Activated B cell treated with CpG ODN at 0.5 μM for 24 hours (primary cell): ENCODE measurements at regions of chr5 and their contacts with region 1.

Region 1: DNA sequence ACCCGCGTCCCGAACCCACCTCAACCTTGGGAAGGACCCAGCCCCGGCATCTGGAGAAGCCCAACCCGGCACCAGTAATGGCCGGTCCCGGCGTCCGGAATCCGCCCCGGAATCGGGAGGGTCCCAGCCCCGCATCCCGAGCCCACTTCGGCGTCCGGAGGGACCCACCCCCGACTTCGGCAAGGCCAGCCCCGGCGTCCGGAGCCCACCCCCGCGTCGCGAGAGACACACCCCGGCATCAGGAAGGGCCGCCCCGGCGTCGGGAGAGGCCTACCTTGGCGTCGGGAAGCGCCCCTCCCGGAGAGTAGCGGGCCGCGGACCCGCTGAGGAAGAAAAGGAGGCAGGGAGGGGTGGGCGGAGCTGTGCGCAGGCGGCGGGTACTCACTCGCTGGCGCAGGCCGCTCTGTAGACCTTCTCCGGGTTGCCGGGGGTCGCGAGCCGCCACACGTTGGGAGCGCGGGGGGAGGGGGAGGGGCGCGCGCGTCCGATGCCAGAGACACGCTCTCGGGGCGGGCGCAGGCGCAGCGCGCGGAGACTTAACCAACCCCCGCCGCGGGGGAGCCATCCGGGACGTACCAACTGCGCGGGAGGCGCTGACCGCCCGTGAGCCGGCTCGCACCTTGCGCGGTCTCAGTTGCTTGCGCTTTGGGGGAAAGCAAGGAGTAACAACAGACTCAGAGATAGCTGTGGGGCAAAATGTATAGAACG is at the start of gene UIMC1:
- DNase-seq: peak; percentile 93
- ATAC-seq: peak; percentile 89
- H3K4me3 Mint-ChIP-seq: peak within 1 kb of the TSS; percentile 93
- H3K27ac Mint-ChIP-seq: peak within 1 kb of the TSS; percentile 95
- H3K4me1 Mint-ChIP-seq: peaks cover 32% of the 10 kb centered on the region
- H3K27me3 Mint-ChIP-seq: no peaks in the 10 kb centered on the region
- CTCF ChIP-seq: no peak
- total RNA-seq, gene UIMC1: 72.5 and 75.8 TPM in 2 replicates

Region 2: GRCh38 chr5:176994460-176995121 is 11.8 kb before region 1 on chr5:
- CTCF ChIA-PET with region 1: interaction called, 6 read pairs
- POLR2A ChIA-PET with region 1: interaction called, 30 read pairs
- intact Hi-C with region 1: loop called (anchors 1 kb)
- DNase-seq: peak; percentile 32
- ATAC-seq: peak; percentile 89
- H3K4me3 Mint-ChIP-seq: peak overlapping the region; percentile 52
- H3K27ac Mint-ChIP-seq: peak overlapping the region; percentile 73
- H3K4me1 Mint-ChIP-seq: peaks cover 74% of the 10 kb centered on the region
- H3K27me3 Mint-ChIP-seq: no peaks in the 10 kb centered on the region
- CTCF ChIP-seq: no peak

Region 3: DNA sequence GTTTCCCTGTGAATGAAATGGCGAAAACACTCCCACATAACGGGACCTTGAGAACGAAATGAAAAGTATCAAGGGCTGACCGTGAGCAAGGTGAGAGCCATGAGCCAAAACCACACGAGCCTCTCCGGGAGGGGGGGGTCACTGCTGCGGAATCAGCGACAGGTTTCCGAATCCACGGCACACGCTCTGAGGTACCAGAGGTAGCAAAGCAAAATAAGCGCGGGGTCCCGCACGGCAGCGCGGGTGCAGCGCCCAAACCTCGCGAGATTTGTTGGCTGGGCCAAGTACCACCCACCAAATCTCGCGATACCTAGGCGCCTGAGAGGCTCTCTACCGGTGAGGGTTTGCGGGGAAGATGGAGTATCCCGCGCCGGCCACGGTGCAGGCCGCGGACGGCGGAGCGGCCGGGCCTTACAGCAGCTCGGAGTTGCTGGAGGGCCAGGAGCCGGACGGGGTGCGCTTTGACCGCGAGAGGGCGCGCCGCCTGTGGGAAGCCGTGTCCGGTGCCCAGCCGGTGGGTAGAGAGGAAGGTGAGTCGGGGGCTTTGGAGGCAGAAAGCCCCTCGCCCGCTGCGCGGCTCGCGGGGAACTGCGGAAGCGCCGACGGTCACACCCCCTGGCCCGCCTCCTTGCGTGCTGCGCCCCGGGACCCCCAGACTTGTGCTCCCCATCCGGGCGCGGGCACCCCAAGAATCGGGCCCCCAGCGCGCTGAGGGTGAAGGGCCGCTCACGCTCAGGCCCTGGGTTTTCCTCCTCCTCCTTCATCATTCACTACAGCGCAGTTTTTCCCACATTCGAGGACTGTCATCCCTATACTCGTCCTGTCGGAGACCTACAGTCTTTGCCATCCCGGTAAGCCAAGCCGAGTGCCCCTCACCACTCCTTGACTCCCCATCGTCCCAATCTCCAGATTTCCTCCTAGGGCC is 16.2 kb after region 1 on chr5 and contains the start of gene ZNF346:
- CTCF ChIA-PET with region 1: interaction called, 5 read pairs
- POLR2A ChIA-PET with region 1: interaction called, 17 read pairs
- intact Hi-C with region 1: loop called (anchors 1 kb)
- DNase-seq: peak; percentile 80
- ATAC-seq: peak; percentile 99
- H3K4me3 Mint-ChIP-seq: peak within 1 kb of the TSS; percentile 95
- H3K27ac Mint-ChIP-seq: peak within 1 kb of the TSS; percentile 89
- H3K4me1 Mint-ChIP-seq: peaks cover 36% of the 10 kb centered on the region
- H3K27me3 Mint-ChIP-seq: no peaks in the 10 kb centered on the region
- CTCF ChIP-seq: no peak
- total RNA-seq, gene ZNF346: 28.0 and 31.4 TPM in 2 replicates

Region 4: GRCh38 chr5:177036921-177037320 is 30.5 kb after region 1 on chr5:
- CTCF ChIA-PET with region 1: no interaction called
- POLR2A ChIA-PET with region 1: no interaction called
- intact Hi-C with region 1: no loop called
- DNase-seq: no peak
- ATAC-seq: no peak
- H3K4me3 Mint-ChIP-seq: no peak overlapping the region
- H3K27ac Mint-ChIP-seq: no peak overlapping the region
- H3K4me1 Mint-ChIP-seq: peaks cover 9% of the 10 kb centered on the region
- H3K27me3 Mint-ChIP-seq: no peaks in the 10 kb centered on the region
- CTCF ChIP-seq: no peak

Region 5: DNA sequence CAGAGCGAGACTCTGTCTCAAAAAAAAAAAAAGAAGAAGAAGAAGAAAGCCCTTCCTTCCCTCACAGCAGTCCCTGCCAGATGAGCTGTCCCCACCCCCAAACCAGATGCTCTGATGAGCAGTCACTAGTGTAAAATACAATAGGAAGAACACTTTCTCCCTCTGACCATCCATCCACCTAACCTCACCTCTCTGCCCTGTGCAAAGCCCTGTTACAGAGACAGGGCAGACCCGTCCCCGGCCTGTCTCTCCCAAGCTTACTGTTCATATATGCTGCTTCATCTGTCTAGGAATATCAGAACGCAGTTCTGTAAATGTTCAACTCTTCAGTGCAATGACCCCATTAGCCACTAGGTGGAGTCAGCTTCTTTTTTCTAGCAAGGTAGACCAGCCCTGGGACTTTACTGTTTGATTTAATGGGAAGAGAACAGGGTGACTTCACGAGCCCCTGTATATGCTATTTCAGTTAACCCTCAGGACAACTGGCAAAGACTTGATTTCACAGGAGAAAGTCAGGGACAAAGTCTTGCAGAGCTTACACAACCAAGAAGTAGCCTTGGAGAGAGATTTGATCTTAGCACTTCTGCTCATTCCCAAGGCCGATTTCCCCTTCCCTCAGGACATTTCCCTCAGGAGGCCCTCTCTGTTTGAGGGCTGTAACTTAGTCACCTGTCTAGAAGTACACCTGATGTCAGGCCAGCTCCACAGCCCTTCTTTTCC is 65.4 kb after region 1 on chr5:
- CTCF ChIA-PET with region 1: no interaction called
- POLR2A ChIA-PET with region 1: no interaction called
- intact Hi-C with region 1: loop called (anchors 5 kb)
- DNase-seq: peak; percentile 55
- ATAC-seq: peak; percentile 89
- H3K4me3 Mint-ChIP-seq: peak overlapping the region; percentile 61
- H3K27ac Mint-ChIP-seq: peak overlapping the region; percentile 82
- H3K4me1 Mint-ChIP-seq: peaks cover 35% of the 10 kb centered on the region
- H3K27me3 Mint-ChIP-seq: no peaks in the 10 kb centered on the region
- CTCF ChIP-seq: peak; percentile 85

Region 6: GRCh38 chr5:177086924-177087706 is 80.7 kb after region 1 on chr5:
- CTCF ChIA-PET with region 1: no interaction called
- POLR2A ChIA-PET with region 1: no interaction called
- intact Hi-C with region 1: loop called (anchors 5 kb)
- DNase-seq: peak; percentile 71
- ATAC-seq: peak; percentile 82
- H3K4me3 Mint-ChIP-seq: peak overlapping the region; percentile 50
- H3K27ac Mint-ChIP-seq: no peak overlapping the region
- H3K4me1 Mint-ChIP-seq: peaks cover 19% of the 10 kb centered on the region
- H3K27me3 Mint-ChIP-seq: peaks cover 6% of the 10 kb centered on the region
- CTCF ChIP-seq: no peak

Region 7: DNA sequence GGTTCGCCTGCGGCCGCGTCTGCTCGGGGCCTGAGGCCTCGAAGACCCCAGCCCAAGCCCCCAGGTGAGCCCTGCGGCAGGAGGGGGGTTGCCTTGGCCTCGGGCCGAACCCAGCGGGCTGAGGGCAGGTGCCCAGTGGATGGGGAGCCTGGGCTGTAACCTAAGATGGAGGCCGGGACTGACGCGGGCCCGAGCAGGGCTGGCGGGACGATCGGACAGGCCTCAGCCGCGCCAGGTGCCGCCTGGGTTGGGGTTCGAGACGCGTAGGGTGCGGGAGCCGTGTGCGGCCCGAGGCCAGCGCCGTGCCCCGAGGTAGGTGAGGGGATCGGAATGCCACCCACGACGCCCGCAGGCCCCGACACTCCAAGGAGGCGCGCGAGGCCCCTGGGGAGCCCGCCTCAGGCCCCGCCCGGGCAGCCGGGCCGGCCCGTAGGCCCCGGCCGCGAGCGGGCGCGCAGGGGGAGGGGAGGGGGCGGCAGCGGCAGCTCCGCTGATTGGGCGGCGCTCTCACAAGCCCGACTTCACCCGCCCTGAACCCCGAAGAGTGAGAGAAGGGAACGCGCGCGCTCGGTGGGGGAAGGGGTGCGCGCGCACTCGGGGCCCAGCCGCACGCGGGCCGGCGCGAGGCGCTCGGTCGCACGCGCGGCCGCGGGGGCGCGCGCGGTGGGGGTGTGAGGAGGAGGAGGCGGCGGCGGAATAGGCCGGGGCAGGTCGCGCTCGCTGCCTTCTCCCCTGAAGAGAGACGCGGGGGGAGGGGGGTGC is 126.9 kb after region 1 on chr5 and contains the start of gene NSD1:
- CTCF ChIA-PET with region 1: no interaction called
- POLR2A ChIA-PET with region 1: interaction called, 5 read pairs
- intact Hi-C with region 1: loop called (anchors 2 kb)
- DNase-seq: peak; percentile 92
- ATAC-seq: peak; percentile 74
- H3K4me3 Mint-ChIP-seq: peak within 1 kb of the TSS; percentile 85
- H3K27ac Mint-ChIP-seq: peak within 1 kb of the TSS; percentile 87
- H3K4me1 Mint-ChIP-seq: peaks cover 52% of the 10 kb centered on the region
- H3K27me3 Mint-ChIP-seq: no peaks in the 10 kb centered on the region
- CTCF ChIP-seq: no peak
- total RNA-seq, gene NSD1: 103 and 108 TPM in 2 replicates

Region 8: GRCh38 chr5:177303121-177303924 is 296.9 kb after region 1 on chr5 and contains the starts of genes PRELID1 and RAB24:
- CTCF ChIA-PET with region 1: no interaction called
- POLR2A ChIA-PET with region 1: no interaction called
- intact Hi-C with region 1: loop called (anchors 5 kb)
- DNase-seq: peak; percentile 93
- ATAC-seq: peak; percentile 41
- H3K4me3 Mint-ChIP-seq: peak within 1 kb of the TSS; percentile 90
- H3K27ac Mint-ChIP-seq: peak within 1 kb of the TSS; percentile 89
- H3K4me1 Mint-ChIP-seq: peaks cover 75% of the 10 kb centered on the region
- H3K27me3 Mint-ChIP-seq: no peaks in the 10 kb centered on the region
- CTCF ChIP-seq: no peak
- total RNA-seq, gene PRELID1: 141 and 160 TPM in 2 replicates
- total RNA-seq, gene RAB24: 35.6 and 36.3 TPM in 2 replicates